ENCODE measurements at regions of chr11 and their contacts with region 1.

Region 1: GRCh38 chr11:11931461-11932055 is 76.9 kb downstream of the DKK3 start:
- DNase-seq: peak; percentile 10
- ATAC-seq: no peak
- H3K4me3 Mint-ChIP-seq: no peak overlapping the region
- H3K27ac Mint-ChIP-seq: no peak overlapping the region
- H3K4me1 Mint-ChIP-seq: no peaks in the 10 kb centered on the region
- H3K27me3 Mint-ChIP-seq: no peaks in the 10 kb centered on the region

Region 2: GRCh38 chr11:11909727-11910126 is 21.8 kb before region 1 on chr11:
- CTCF ChIA-PET with region 1: no interaction called
- POLR2A ChIA-PET with region 1: no interaction called
- intact Hi-C with region 1: no loop called
- DNase-seq: no peak
- ATAC-seq: no peak
- H3K4me3 Mint-ChIP-seq: no peak overlapping the region
- H3K27ac Mint-ChIP-seq: no peak overlapping the region
- H3K4me1 Mint-ChIP-seq: no peaks in the 10 kb centered on the region
- H3K27me3 Mint-ChIP-seq: no peaks in the 10 kb centered on the region

Region 3: DNA sequence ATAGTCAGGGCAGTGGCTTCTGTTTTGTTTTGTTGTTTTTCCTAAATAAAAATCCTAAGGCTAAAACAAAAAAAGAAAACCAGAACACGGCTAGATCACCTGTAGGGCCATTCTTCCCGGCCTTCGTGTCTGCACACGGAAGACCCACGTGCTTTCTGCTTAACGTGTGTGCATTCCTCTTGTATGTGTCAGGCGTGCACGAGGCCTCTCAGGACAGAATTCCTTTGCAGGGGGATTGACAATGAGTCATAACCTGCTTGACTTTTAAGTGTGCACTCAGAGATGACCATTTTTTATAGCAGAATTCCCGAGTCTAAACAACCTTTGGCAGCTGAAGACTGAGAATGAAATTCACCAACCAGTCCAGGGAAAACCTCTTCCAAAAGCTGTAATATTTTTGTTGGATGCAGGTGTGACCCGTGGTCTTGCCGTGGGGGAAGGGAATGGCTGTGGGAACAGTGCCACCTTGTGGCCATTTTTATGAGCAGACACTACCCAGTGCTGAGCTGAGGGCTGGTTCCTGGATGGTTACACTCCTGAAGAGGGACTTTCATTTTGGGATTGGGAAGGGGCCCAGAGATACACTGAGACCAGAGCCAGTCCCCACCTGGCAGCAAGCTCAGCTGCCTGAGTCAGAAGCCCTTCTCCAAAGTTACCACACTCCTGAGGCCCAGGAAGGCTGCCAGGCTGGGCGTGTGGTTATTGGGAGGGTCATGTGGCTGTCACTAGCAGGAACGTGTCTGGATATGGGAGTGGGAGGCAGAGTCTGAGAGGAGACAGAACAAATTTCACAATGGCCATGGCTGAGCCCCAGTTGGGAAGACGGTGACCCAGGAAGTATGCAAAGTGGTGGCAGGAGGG is 112.6 kb after region 1 on chr11:
- CTCF ChIA-PET with region 1: interaction called, 5 read pairs
- POLR2A ChIA-PET with region 1: no interaction called
- intact Hi-C with region 1: loop called (anchors 1 kb)
- DNase-seq: peak; percentile 80
- ATAC-seq: peak; percentile 73
- H3K4me3 Mint-ChIP-seq: no peak overlapping the region
- H3K27ac Mint-ChIP-seq: no peak overlapping the region
- H3K4me1 Mint-ChIP-seq: peaks cover 11% of the 10 kb centered on the region
- H3K27me3 Mint-ChIP-seq: peaks cover 4% of the 10 kb centered on the region

Region 4: GRCh38 chr11:12356944-12357650 is 425.5 kb after region 1 on chr11:
- CTCF ChIA-PET with region 1: no interaction called
- POLR2A ChIA-PET with region 1: no interaction called
- intact Hi-C with region 1: no loop called
- DNase-seq: no peak
- ATAC-seq: no peak
- H3K4me3 Mint-ChIP-seq: no peak overlapping the region
- H3K27ac Mint-ChIP-seq: no peak overlapping the region
- H3K4me1 Mint-ChIP-seq: peaks cover 43% of the 10 kb centered on the region
- H3K27me3 Mint-ChIP-seq: no peaks in the 10 kb centered on the region

Measured in activated CD4-positive, alpha-beta T cell treated with anti-CD3 and anti-CD28 coated beads for 36 hours (primary cell).